ENCODE measurements at regions of chr6 and their contacts with region 1.

Region 1: DNA sequence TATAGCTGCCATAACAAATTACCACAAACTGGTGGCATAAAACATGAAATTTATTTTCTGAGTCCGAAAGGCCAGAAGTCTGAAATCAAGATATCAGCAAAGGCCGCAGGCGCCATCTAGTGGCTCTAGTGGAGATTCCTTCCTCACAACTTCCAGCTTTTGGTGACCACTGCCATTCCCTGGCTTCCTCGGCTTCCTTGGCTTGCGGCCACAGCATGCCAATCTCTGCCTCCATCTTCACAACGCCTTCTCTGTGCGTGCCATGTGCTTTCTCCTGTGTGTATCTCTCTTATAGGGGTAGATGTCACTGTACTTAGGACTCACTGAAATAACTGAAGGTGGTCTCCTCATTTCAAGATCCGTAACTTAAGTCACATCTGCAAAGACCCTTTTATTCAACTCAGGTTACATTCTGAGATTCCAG is 5.4 kb upstream of the PLAGL1 start:
- DNase-seq: peak; percentile 85
- H3K4me3 ChIP-seq: no peak overlapping the region
- H3K27ac ChIP-seq: no peak overlapping the region
- H3K4me1 ChIP-seq: no peaks in the 10 kb centered on the region
- H3K27me3 ChIP-seq: no peaks in the 10 kb centered on the region
- CTCF ChIP-seq: peak; percentile 76 to 90 (median 84)
- EP300 ChIP-seq: no peak
- POLR2A ChIP-seq: no peak

Region 2: DNA sequence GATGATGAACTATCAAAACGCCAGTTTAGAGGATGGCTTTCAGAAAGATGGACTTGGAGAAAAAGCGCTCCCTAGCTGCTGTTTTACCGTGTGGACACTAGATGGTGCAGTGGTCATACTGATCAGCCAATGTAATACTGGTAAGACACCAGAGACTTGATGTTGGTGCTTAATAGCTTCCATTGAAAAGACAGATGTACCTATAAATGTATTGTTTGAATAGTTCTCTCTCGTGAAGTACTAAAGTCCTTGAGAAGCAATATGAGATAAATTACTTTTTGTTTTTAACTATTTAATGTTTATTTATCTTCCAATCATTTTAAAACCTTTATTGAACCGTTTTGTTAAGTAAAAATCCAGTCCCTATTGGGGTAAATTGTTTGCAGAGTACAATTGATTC is 438.1 kb before region 1 on chr6:
- intact Hi-C with region 1: loop called (anchors 1 kb)
- DNase-seq: peak; percentile 74
- H3K4me3 ChIP-seq: no peak overlapping the region
- H3K27ac ChIP-seq: peak overlapping the region in 1 of 4 donors; percentile 6
- H3K4me1 ChIP-seq: no peaks in the 10 kb centered on the region
- H3K27me3 ChIP-seq: no peaks in the 10 kb centered on the region
- CTCF ChIP-seq: peak; percentile 78 to 90 (median 88)
- EP300 ChIP-seq: no peak
- POLR2A ChIP-seq: no peak

Region 3: GRCh38 chr6:143940011-143940597 is 73.4 kb before region 1 on chr6:
- intact Hi-C with region 1: loop called (anchors 5 kb)
- DNase-seq: no peak
- H3K4me3 ChIP-seq: no peak overlapping the region
- H3K27ac ChIP-seq: no peak overlapping the region
- H3K4me1 ChIP-seq: no peaks in the 10 kb centered on the region
- H3K27me3 ChIP-seq: no peaks in the 10 kb centered on the region
- CTCF ChIP-seq: peak in 2 of 4 experiments; percentile 42 to 43
- EP300 ChIP-seq: no peak
- POLR2A ChIP-seq: no peak

Measured in sigmoid colon (tissue), 7 donors.